Head of caudate nucleus (tissue), 42 donors: ENCODE measurements at regions of chr2 and their contacts with region 1.

Region 1: GRCh38 chr2:95076784-95077529 is 44.7 kb downstream of the MRPS5 start:
- DNase-seq: peak; percentile 84 to 96 (median 91)

Region 2: DNA sequence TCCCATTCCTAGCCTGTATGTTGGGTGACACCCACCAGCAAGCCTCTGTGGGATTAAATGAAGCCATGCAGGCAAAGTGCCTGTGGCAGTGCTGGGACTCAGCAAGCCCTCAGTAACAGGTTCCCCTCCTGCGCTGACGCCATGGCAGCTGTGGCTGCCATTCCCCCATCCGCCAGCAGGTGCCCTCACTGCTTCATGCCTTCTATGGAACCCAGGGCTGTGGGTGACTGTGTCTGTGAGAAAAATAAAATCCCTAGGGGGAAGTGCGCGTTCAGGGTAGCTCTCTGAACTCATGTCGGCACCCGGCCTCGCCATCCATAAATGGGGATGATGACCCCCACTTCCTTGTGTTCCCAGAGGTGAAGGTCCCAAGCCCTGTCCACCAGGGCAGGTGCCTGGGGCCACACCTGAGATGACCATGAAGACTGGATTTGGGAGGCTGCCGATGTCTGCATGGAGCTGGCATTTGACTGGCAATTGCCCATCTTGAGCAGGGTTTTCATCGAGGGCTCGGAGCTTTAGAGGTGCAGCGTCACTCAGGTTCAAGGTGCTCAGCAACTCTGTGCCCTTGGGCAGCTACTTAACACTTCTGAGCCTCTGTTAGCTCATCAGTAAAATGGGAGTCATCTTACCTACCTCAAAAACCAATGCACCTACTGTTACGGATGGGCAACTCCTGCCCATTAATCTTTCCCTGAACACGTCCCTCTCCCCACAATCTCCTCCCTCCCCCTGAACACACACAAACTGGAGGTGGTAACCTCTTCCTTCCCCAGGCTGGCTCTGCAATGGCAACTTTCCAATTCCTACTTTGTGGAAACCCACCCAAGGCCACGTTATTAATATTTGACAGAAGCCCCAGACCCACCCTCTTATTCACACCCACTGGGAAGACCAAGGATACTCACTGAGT is 54.4 kb before region 1 on chr2:
- intact Hi-C with region 1: loop called (anchors 2 kb)
- DNase-seq: peak; percentile 65 to 96 (median 90)